Mammary epithelial cell (primary cell): ENCODE measurements at regions of chr2 and their contacts with region 1.

Region 1: DNA sequence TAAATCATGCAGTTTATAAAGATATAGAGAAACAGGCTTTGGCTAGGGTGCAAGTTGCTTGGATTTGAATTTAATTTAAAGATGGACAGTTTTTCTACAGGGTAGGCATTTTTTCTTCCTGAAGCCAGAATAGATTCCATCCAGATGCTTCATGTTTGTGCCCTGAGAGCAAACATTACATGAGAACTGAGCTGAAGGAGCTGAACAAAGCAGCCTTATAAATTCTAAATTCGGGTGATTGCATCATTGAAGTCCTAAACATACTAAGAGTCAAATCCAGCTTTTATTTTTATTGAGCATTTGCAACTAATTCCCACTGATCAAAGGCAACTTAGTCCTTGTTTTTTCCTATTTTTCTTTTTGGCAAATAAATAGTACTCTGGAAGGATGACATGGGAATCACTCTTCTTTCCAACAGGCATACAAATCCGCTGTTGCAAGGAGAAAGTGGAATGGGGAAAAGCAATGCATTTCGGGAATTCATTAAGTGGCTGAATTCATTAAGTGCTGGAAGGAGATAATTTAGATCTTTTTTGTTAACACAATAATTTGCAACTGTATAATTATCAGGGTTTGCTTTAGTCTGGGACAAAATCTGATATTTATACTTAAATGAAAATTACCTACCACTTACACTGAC is 828.0 kb downstream of the SLC4A3 start:
- DNase-seq: no peak
- H3K4me3 ChIP-seq: no peak overlapping the region
- H3K27ac ChIP-seq: no peak overlapping the region
- H3K4me1 ChIP-seq: no peaks in the 10 kb centered on the region
- H3K27me3 ChIP-seq: no peaks in the 10 kb centered on the region
- CTCF ChIP-seq: no peak

Region 2: GRCh38 chr2:220053919-220054318 is 401.6 kb before region 1 on chr2:
- CTCF ChIA-PET with region 1: no interaction called
- dilution Hi-C with region 1: no loop called
- in situ Hi-C with region 1: no loop called
- intact Hi-C with region 1: no loop called
- DNase-seq: no peak
- H3K4me3 ChIP-seq: no peak overlapping the region
- H3K27ac ChIP-seq: no peak overlapping the region
- H3K4me1 ChIP-seq: no peaks in the 10 kb centered on the region
- H3K27me3 ChIP-seq: no peaks in the 10 kb centered on the region
- CTCF ChIP-seq: peak; percentile 37 to 51

Region 3: DNA sequence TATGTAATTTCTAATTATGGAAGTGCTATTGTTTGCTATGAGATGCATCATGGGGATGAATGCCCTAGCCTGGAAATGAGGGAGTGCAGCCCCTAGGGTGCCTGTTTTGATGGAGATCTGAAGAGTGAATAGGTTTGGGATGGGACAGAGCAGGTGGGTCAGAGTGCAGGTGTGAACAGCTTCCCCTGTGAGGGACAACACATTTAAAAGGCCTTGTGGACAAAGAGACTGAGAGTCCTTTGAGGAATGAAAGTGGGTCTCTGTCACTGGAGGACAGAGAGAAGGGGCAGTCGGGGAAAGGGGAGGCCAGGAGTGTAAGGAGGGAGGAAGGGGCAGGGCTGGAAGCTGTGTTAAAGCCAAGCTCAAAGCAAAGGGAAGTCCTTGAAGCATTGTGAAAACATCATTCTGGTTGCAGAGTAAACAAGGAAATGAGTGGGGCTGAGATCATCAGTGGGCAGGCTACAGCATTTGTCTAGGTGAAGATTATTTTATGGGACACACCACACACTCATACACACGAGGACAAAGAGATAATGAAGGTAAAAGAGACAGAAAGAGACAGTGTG is 49.5 kb after region 1 on chr2:
- CTCF ChIA-PET with region 1: no interaction called
- dilution Hi-C with region 1: loop called (anchors 5 kb)
- in situ Hi-C with region 1: no loop called
- intact Hi-C with region 1: no loop called
- DNase-seq: peak; percentile 77
- H3K4me3 ChIP-seq: peak overlapping the region in 1 of 3 experiments; percentile 11
- H3K27ac ChIP-seq: peak overlapping the region; percentile 55
- H3K4me1 ChIP-seq: peaks cover 24% of the 10 kb centered on the region
- H3K27me3 ChIP-seq: no peaks in the 10 kb centered on the region
- CTCF ChIP-seq: no peak